H1 (cell line): ENCODE measurements at regions of chr15 and their contacts with region 1.

Region 1: DNA sequence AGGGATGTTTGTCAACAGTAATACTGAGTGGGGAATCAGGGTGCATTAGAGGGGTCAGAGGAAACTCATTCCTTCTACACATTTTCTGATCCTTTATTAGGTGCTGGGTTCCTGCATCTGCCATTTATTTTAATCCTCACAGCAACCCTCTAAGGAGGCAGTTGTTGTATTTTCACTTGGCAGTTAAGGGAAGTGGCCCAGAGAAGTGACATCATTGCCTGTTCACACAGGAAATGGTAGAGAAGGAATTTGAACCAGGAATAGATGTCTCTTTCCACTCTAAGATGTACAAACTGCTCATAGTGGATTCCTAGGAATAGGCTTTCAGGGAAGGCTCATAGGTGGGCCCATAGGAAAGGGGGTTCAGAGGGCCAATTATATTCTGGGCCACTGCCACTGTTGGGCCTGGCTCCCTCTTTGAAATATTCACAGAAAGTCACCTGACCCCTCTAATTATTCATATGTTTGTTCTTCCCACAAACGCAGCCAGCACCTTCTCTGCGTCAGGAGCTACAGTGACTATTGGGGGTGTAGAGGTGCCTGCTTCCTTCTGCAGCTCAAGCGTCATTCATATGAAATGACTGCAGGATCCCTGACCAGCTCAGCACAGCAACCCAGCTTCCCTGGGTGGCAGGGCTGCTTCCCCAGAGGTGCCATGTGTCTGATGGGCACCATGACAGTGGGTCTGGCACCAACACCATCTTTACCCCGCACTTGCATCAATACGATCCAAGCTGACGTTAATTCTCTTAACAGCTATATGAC is 163.9 kb upstream of the SMAD3 start:
- DNase-seq: no peak
- H3K4me3 ChIP-seq: no peak overlapping the region
- H3K27ac ChIP-seq: no peak overlapping the region
- H3K4me1 ChIP-seq: peaks cover 0 to 5% (median 0%) of the 10 kb centered on the region in 4 experiments; a peak in 2 of 7 replicates
- H3K27me3 ChIP-seq: peaks cover 0 to 3% (median 0%) of the 10 kb centered on the region in 4 experiments; a peak in 1 of 7 replicates
- CTCF ChIP-seq: no peak
- EP300 ChIP-seq: no peak
- POLR2A ChIP-seq: no peak
- RAD21 ChIP-seq: no peak

Region 2: GRCh38 chr15:66803182-66803729 is 98.3 kb before region 1 on chr15:
- CTCF ChIA-PET with region 1: no interaction called
- POLR2A ChIA-PET with region 1: no interaction called
- DNase-seq: peak; percentile 56 to 73
- H3K4me3 ChIP-seq: no peak overlapping the region
- H3K27ac ChIP-seq: no peak overlapping the region
- H3K4me1 ChIP-seq: peaks cover 0 to 9% (median 7%) of the 10 kb centered on the region in 4 experiments; a peak in 5 of 7 replicates
- H3K27me3 ChIP-seq: no peaks in the 10 kb centered on the region
- CTCF ChIP-seq: no peak
- EP300 ChIP-seq: no peak
- POLR2A ChIP-seq: no peak
- RAD21 ChIP-seq: no peak; a peak in 1 of 4 replicates

Region 3: DNA sequence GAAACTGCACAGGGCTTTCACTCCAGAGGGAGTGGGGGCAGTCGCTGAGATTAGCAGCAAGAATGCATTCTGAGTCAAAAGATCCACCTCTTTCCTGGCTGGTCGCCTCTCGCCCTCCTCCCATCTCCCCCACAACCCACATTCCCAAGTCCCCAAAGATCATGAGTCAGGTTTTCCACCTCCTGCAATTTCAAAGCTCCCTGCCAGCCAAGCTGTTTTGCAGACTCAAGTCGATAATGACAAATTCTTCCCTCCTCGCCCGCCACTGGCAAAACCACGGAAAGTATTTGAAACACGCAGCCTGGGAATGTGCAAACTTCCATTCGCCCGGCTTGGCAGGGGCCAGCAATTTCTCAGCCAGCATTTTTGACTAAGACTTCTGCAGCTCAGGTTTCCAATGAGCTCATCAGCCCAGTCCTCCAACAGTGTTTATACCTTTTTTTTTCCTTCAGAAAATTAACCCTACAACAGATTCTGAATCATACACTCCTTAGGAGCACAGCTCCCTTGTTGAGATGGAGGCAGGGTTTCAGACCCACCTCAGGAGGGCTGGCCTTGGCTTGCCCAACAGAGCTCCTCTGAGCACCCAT is 18.1 kb before region 1 on chr15:
- CTCF ChIA-PET with region 1: interaction called, 27 read pairs
- POLR2A ChIA-PET with region 1: interaction called, 4 read pairs
- DNase-seq: peak; percentile 58 to 89
- H3K4me3 ChIP-seq: no peak overlapping the region
- H3K27ac ChIP-seq: 0 out of 2 replicates have a peak overlapping the region, but pooled peaks have one; percentile 21
- H3K4me1 ChIP-seq: peaks cover 0 to 9% (median 4%) of the 10 kb centered on the region in 4 experiments; a peak in 5 of 7 replicates
- H3K27me3 ChIP-seq: no peaks in the 10 kb centered on the region
- CTCF ChIP-seq: no peak
- EP300 ChIP-seq: peak in 1 of 2 experiments; percentile 38; a peak in 1 of 3 replicates
- POLR2A ChIP-seq: peak in 1 of 2 experiments; percentile 50; a peak in 1 of 3 replicates
- RAD21 ChIP-seq: no peak